Left ventricle myocardium superior (tissue), 1 donor: ENCODE measurements at regions of chr21 and their contacts with region 1.

Region 1: GRCh38 chr21:41612674-41613532 is 104.9 kb upstream of the TMPRSS2 start:
- DNase-seq: peak; percentile 81
- ATAC-seq: peak; percentile 94

Region 2: DNA sequence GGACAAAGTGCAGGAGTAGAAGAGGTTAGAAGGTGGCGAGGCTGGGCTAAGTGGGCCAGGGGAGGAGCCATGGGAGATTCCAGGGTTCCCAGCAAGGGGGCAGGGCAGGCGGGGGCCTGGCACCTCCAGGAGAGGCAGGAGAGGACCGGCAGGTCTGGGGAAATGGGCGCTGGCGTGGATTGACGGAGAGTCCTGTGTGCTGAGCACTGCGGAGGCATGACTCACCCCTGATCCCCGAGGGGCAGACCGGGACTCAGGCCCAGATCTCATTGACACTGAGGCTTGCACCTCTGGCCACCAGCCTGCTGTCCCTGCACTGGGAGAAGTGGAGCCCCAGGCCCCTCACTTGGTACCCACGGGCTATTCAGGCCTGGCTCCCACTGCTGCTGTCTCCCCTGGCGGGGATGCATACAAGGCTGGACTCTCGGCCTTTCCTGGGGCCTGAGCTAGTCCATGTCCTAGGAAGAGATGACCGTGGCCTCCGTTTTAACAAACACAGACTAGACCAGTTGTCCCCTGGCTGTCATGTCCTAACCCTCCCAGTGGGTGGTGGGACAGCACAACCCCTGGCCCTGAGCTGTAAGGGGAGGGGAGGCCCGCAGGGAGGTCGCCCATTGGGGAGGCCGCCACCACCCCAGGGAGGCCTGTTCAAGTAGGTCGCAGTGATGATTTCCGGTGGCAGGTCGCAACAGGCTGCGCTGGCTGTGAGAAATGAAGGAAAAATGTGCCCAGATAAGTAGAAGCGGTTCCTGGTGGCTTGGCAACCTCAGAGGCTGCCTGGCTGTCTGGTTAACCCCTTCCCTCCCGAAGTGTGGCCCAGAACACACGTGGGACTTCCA is 114.3 kb after region 1 on chr21:
- intact Hi-C with region 1: no loop called
- DNase-seq: peak; percentile 78
- ATAC-seq: peak; percentile 91

Region 3: GRCh38 chr21:41777951-41778874 is 165.3 kb after region 1 on chr21:
- intact Hi-C with region 1: loop called (anchors 5 kb)
- DNase-seq: peak; percentile 90
- ATAC-seq: peak; percentile 97